HCT116 (cell line): ENCODE measurements at regions of chr1 and their contacts with region 1.

Region 1: DNA sequence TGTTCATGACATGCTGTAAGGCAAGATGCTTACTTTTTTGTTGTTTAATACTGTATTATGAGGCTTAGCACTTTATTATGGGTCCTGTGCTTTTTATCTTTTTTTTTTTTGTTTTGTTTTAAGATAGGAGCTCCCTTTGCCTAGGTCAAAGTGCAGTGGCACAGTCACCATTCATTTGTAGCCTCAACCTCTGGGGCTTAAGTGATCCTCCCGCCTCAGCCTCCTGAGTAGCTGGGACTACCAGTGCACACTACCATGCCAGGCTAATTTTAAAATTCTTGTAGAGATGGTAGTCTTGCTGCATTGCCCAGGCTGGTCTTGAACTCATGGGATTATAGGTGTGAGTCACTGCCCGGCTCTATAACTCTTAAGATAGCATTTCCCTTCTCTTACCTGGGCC is 4.6 kb downstream of the UBAP2L start:
- DNase-seq: no peak
- ATAC-seq: no peak
- H3K4me3 ChIP-seq: no peak overlapping the region
- H3K27ac ChIP-seq: no peak overlapping the region
- H3K4me1 ChIP-seq: peaks cover 4 to 9% of the 10 kb centered on the region in 2 experiments; a peak in 2 of 4 replicates
- H3K27me3 ChIP-seq: no peaks in the 10 kb centered on the region
- CTCF ChIP-seq: no peak
- POLR2A ChIP-seq: no peak
- RAD21 ChIP-seq: no peak

Region 2: DNA sequence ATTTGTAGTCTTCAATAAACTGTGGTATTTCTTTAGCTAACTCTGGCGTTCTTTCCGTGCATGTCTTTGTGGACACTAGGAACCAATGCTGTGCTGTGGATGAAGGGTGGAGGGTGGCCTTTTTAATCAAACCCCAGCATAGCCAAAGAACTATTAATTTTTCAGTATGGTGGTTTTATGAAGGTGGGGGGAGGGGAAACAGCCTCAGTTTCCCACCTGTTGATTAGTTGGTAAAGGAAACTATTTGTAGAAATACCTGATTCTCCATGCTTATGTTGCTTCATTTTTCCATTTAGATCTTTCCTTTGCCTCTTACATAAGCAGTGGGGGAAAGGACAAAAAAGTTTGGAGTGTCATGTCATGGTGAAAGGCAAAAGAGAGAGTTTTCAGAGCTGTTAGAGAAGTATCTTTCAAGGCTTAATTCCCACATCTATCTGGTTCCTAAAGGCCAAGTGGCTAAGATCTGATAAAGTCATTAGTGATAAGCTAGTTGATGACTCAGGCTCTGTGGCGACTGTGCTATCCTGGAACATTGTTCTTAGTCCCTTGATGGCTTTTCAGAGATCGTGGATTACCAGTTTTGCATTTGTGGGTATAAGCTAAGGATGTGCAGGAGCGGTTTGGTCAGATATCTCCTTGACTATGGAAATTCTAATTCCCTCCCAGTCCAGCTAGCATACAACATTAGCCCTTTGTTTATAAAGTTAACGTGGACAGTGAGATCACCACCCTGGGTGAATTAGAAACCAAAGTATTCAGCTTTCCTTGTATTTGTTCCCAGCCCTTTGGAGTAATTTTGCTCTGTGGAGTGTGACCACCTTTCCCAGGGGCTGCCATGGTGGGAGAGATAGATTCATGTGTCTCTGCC is 38.3 kb after region 1 on chr1:
- CTCF ChIA-PET with region 1: no interaction called
- POLR2A ChIA-PET with region 1: no interaction called
- RAD21 ChIA-PET with region 1: no interaction called
- intact Hi-C with region 1: loop called (anchors 5 kb)
- DNase-seq: no peak
- ATAC-seq: no peak
- H3K4me3 ChIP-seq: no peak overlapping the region
- H3K27ac ChIP-seq: no peak overlapping the region
- H3K4me1 ChIP-seq: no peaks in the 10 kb centered on the region
- H3K27me3 ChIP-seq: no peaks in the 10 kb centered on the region
- CTCF ChIP-seq: no peak
- POLR2A ChIP-seq: no peak
- RAD21 ChIP-seq: no peak

Region 3: GRCh38 chr1:154386643-154387352 is 161.4 kb after region 1 on chr1:
- CTCF ChIA-PET with region 1: no interaction called
- POLR2A ChIA-PET with region 1: no interaction called
- RAD21 ChIA-PET with region 1: no interaction called
- intact Hi-C with region 1: no loop called
- DNase-seq: no peak
- ATAC-seq: no peak
- H3K4me3 ChIP-seq: no peak overlapping the region
- H3K27ac ChIP-seq: no peak overlapping the region
- H3K4me1 ChIP-seq: peaks cover 4 to 5% of the 10 kb centered on the region in 2 experiments; a peak in 2 of 4 replicates
- H3K27me3 ChIP-seq: no peaks in the 10 kb centered on the region
- CTCF ChIP-seq: no peak
- POLR2A ChIP-seq: no peak
- RAD21 ChIP-seq: no peak